ENCODE measurements at regions of chr20 and their contacts with region 1.

Region 1: DNA sequence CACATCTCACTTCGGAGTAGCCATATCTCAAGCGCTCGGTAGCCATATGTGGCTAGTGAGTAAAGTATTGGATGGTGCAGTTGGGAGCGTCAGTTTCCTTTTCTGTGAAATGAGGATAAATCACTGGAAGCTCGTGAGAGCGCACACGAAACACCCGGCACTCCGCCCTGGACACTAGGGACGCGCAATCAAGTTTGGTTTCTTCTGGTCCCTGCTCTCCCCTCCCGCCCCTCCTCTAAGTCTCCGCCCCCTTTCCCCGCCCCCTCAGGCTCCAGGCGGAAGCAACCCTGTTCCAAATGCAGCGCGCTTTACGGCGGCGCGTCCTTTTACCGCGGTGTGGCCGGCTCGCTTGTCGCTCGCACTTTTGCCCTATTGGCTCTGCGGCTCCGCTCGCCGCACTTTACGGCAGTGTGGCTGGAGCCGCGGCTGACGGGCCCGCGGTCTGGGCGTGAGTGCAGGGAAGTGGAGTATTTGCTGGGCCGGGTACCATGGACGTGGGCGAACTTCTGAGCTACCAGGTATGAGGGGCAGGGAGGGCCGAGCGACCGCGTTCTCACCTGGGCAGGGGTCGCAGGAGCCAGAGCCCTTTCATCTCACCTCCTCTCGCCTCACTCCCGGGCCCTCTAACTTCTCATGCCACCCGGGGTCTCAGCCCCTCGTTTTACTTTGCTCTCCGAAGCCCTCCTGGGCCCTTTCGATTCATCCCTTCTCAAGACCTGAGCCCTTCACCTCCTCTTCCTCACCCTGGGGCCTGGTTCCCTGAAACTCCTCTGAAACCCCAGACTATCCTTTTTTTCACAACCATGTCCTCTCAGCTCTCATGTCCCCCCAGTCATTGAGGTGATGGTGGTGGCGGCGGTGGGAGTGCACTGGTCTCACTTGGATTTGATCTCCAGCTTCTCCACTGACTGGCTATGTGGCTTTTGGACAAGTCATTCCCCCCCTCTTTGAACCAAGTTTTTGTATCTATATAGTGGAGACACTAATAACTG is at the start of gene CTNNBL1:
- DNase-seq: peak; percentile 90 to 98 (median 95)
- ATAC-seq: peak; percentile 98
- H3K4me3 ChIP-seq: peak within 1 kb of the TSS; percentile 98
- H3K4me3 Mint-ChIP-seq: peak within 1 kb of the TSS; percentile 96
- H3K27ac ChIP-seq: peak within 1 kb of the TSS; percentile 29 to 53
- H3K27ac Mint-ChIP-seq: peak within 1 kb of the TSS; percentile 91
- H3K4me1 ChIP-seq: peaks cover 15% of the 10 kb centered on the region
- H3K4me1 Mint-ChIP-seq: peaks cover 52% of the 10 kb centered on the region
- H3K27me3 ChIP-seq: peaks cover 9% of the 10 kb centered on the region in 2 experiments
- H3K27me3 Mint-ChIP-seq: peaks cover 9% of the 10 kb centered on the region
- CTCF ChIP-seq: no peak
- total RNA-seq, gene CTNNBL1: 31.1 to 33.4 TPM

Region 2: DNA sequence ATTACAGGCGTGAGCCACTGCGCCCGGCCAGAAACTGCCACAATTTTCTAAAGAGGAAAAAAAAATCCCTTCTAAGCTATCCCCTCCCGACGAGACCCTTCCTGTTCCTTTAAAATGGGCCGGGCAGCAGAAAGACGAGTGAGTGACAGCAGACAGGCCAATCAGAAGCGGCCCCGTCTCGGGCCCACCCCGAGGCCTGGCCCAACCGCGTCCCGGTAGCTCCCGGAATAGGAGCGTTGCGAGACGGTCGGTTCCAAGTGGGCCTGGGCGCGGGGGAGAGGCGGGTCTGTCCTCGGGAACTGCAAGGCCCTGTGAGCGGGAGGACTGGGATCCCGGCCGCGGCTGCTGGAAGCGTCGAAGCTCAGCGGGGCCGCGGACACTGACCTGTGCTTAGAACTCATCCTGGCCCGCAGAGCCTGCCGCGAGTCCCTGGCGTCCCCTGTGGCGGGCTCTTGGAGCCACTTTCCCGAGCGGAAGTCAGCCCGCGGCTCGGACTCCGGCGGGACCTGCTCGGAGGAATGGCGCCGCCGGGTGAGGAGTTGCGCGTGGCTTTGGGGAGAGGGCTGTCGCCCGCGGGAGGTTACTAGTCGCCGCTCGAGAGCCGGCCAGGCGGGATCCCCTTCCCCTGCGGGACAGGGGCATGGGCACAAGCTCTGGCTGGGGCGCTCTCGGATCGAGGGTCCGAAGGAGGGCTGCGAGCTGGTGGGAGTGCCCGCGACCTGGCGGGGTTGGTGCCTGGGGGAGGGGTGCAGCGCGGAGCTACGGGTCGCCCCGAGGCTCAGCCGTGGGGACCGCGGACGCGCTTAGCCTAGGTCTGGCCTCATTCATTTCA is 514.9 kb before region 1 on chr20 and contains the starts of genes MROH8 and RPN2:
- CTCF ChIA-PET with region 1: no interaction called
- POLR2A ChIA-PET with region 1: no interaction called
- intact Hi-C with region 1: loop called in 1 of 2 experiments (anchors 5 kb)
- DNase-seq: peak; percentile 87 to 96 (median 93)
- ATAC-seq: peak; percentile 92
- H3K4me3 ChIP-seq: peak within 1 kb of the TSS; percentile 80
- H3K4me3 Mint-ChIP-seq: peak within 1 kb of the TSS; percentile 99
- H3K27ac ChIP-seq: peak within 1 kb of the TSS; percentile 84 to 90
- H3K27ac Mint-ChIP-seq: peak within 1 kb of the TSS; percentile 88
- H3K4me1 ChIP-seq: peaks cover 40% of the 10 kb centered on the region
- H3K4me1 Mint-ChIP-seq: peaks cover 46% of the 10 kb centered on the region
- H3K27me3 ChIP-seq: no peaks in the 10 kb centered on the region
- H3K27me3 Mint-ChIP-seq: no peaks in the 10 kb centered on the region
- CTCF ChIP-seq: no peak
- total RNA-seq, gene MROH8: 1.1 to 1.2 TPM
- total RNA-seq, gene RPN2: 62.8 to 65.8 TPM

Region 3: DNA sequence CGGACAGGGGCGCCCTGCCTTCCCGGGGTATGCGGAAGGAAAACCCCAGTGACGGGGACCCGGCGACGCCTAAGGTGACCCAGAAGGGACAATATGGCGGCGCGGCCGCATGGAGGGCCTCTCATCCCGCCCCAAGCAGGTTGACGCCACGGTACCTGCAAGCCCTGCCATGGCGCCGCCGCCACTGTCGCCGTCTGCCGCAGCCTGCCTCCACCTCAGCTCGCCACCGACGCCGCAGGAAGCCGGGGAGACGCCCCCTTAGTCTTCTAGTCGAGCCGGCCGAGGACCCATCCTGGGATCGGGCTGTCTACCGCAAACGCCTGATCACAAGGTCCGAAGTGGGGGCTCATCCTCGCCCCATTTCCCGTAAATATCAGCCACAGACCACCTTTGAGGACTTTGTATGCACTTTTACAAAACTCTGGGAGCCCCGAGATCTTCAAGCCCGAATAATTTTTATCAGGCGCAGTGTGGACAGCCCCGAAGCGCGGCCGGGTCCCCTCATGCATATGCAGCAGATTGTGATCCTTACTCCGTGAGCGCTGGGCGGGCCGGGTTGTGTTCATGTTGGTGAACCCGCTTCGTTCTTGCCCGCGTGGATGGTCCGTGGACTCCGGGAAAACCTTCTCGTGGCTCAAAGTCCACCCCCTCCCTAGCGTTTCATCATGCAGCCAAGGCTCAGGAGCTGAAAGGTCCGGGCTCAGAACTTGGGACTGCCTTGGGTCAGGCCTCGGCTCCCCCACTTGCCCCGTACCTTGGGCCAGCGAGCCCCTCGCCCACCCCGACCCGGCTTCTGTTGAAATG is 166.1 kb before region 1 on chr20 and contains the start of gene BLCAP:
- CTCF ChIA-PET with region 1: no interaction called
- POLR2A ChIA-PET with region 1: no interaction called
- intact Hi-C with region 1: loop called in 1 of 2 experiments (anchors 2 kb)
- DNase-seq: peak; percentile 89 to 97 (median 92)
- ATAC-seq: peak; percentile 92
- H3K4me3 ChIP-seq: peak within 1 kb of the TSS; percentile 100
- H3K4me3 Mint-ChIP-seq: peak within 1 kb of the TSS; percentile 94
- H3K27ac ChIP-seq: peak within 1 kb of the TSS; percentile 99
- H3K27ac Mint-ChIP-seq: peak within 1 kb of the TSS; percentile 98
- H3K4me1 ChIP-seq: peaks cover 53% of the 10 kb centered on the region
- H3K4me1 Mint-ChIP-seq: peaks cover 52% of the 10 kb centered on the region
- H3K27me3 ChIP-seq: no peaks in the 10 kb centered on the region
- H3K27me3 Mint-ChIP-seq: no peaks in the 10 kb centered on the region
- CTCF ChIP-seq: no peak
- total RNA-seq, gene BLCAP: 59.4 to 60.1 TPM

Region 4: DNA sequence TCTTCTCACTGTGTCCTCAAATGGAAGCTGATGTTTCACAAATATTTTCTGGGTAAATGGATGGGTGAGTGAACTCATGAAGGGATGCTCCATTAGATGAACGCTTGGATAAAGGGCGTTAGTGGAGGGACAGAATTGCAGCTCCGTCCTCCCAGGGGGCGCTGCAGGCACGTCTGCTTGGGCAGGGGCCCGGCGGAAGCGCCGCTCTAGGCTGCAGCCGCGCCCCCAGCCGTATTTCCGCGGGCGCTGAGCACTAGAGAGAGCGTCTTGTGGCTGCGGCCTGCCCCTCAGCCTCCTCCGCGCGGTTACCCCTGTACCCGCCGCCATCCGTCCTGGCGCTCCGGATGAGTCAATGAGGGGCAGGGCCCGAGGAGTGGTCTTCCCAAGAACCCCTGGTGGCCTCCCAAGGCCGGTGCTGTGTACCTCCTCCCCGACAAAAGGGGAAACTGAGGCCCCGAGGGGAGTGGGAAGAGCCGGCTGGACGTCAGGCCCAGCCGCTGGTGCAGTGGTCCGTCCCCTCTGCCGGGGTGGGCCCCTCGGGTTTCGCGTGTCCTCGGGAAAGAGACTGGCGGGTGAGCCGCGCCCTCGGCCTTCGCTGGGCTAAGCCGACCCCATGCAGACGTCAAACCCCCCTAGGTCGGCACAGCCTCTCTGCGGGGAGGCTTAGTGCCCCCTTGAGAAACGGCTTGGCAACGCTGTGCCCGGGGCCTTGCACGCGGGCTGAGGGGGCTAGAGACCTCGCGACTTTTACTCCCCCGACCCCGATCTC is 752.7 kb after region 1 on chr20:
- CTCF ChIA-PET with region 1: no interaction called
- POLR2A ChIA-PET with region 1: no interaction called
- intact Hi-C with region 1: loop called in 1 of 2 experiments (anchors 10 kb)
- DNase-seq: peak; percentile 87 to 96 (median 91)
- ATAC-seq: peak; percentile 98
- H3K4me3 ChIP-seq: peak overlapping the region; percentile 89
- H3K4me3 Mint-ChIP-seq: peak overlapping the region; percentile 85
- H3K27ac ChIP-seq: peak overlapping the region; percentile 38 to 75
- H3K27ac Mint-ChIP-seq: peak overlapping the region; percentile 64
- H3K4me1 ChIP-seq: peaks cover 22% of the 10 kb centered on the region
- H3K4me1 Mint-ChIP-seq: peaks cover 25% of the 10 kb centered on the region
- H3K27me3 ChIP-seq: no peaks in the 10 kb centered on the region
- H3K27me3 Mint-ChIP-seq: peaks cover 2% of the 10 kb centered on the region
- CTCF ChIP-seq: peak; percentile 100

Measured in CD4-positive, alpha-beta T cell (primary cell).